ENCODE measurements at regions of chr3 and their contacts with region 1.

Region 1: GRCh38 chr3:8441969-8442559 is 59.6 kb upstream of the LMCD1 start:
- DNase-seq: peak in 1 of 10 donors; percentile 70

Region 2: DNA sequence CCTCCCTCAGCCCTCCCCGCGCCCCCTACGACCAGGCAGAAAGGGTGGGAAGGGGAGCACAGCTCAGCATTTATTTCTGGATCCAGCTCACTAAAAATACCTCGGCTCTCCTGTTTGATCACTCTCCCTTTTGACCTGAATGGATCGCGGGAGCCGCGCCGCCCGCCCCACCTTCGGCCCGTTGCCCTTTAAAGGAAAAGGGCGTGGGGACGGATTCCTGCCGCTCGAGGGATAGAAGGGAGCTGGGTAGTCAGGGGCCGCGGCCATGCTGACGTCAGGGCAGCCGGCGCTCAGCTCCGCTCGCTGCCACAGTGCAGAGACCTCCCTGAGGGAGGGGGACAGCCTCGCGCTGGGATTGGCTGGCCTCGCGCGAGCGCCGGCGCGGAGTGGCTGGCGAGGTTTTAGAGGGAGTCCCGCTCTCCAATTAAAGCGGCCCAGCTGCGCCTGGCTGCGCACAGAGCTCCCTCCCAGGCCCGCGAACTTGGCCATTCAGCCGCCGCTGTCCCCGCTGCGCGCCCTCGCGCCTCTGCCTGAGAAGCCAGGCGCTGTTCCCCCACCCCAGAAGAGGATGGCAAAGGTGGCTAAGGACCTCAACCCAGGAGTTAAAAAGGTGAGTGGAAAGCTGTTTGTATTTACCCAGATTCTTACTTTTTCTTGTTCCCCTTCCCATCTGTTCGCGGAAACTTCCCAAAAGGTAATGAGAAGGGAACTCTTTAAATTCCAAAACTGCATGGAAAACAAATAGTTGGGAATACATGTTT is 59.5 kb after region 1 on chr3 and contains the start of gene LMCD1:
- intact Hi-C with region 1: loop called (anchors 5 kb)
- DNase-seq: peak; percentile 95 to 100 (median 97)

Region 3: DNA sequence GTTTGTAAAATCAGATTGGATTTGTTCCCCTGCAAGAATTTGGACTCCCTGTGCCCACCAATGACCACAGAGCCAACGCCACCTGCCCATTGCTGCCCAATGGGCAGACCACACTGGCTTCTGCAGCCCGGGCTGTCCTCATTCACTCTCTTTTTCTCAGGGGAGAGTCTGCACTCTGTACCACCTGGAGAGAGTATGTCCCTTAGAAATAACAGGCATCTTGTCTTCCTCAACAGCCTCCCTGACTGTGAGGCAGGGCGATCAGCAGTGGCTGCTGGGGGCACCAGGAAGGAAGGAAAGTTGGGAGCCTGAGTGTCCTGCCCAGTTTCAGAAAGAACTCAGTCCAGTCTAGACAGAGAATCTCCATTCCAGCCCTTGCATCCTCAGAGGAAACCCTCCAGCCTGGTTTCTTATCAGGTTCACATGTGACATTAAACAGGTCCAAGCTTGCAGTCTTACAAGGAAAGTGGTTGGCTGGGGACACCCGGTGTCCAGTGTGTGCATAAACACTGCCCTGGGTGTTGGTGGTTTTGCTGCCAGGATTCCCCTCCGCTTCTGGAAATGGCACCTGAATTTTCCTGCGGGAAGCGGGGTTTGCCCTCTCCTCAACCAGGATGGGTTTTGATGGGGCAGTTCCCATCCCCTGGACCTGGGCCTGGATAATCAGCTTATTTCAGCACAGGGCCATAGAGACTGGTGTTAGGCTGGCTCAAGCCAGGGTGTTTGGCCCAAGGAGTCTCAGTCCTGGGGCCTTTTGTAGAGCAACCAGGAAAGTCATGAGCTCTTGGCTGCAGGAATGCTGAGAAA is 165.4 kb after region 1 on chr3:
- intact Hi-C with region 1: loop called (anchors 1 kb)
- DNase-seq: peak in 5 of 10 donors; percentile 25 to 92 (median 42)

Region 4: DNA sequence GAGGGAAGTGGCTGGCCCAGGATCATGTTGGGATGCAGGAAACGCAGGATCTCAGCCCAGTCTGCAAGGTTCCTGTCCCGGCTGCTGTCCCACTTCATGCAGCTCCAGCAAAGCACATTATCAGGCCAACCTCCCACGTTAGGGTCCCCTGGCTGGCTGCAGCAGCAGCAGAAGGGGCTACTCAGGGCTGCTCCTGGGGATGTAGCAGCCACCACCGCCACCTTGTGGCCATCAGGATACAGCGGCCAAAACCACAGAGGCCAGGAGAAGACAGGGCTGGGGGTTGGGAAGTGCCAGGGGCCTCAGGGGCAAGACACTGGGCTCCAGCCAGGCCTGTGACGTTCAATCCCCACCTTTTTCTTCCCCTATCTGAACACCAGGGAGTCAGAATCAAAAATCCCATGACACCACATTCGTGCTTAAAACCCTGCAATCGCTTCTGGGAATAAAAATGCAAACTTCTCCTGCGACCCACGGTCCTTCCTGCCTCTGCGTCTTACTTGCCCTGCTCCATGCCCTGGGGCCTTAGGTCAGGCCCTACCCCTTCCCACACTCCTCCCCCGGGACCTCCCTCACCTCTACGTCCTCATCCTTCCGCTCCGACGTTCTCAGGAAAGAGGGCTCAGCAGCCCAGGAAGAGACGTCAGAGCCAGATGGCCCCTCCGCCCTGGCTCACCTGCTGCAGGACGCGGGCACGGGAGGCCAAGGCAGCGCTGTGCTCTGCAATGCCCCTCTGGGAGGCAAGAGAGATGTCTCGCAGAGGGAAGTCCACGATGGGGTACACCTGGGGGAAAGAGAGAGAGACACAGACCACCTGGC is 181.0 kb after region 1 on chr3:
- intact Hi-C with region 1: loop called (anchors 1 kb)
- DNase-seq: peak; percentile 47 to 95 (median 75)